PC-9 (cell line): ENCODE measurements at regions of chr17 and their contacts with region 1.

Region 1: GRCh38 chr17:31754239-31754945 is 104.7 kb downstream of the COPRS start:
- DNase-seq: peak in 1 of 2 experiments; percentile 75
- H3K4me3 ChIP-seq: no peak overlapping the region
- H3K27ac ChIP-seq: peak overlapping the region; percentile 67
- H3K4me1 ChIP-seq: peaks cover 19% of the 10 kb centered on the region
- H3K27me3 ChIP-seq: no peaks in the 10 kb centered on the region
- CTCF ChIP-seq: no peak

Region 2: DNA sequence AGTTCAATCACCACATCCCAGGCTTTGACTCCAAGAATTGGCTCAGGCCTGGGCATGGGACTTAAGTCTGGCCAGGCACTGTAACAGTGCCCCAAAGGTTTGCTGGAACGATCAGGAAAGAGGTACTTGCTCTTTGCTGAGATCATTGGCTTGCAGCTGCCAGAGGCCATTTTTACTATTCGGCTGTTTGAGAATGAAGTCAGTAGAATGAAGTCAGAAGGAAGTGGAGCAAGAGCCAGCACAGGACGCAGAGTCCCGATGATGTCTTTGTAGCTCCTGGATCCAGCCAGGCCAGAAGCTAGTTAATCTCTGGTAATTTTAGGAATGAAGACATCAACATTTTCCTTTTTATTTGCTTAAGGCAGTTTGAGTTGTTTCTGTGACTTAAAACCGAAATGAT is 167.4 kb before region 1 on chr17:
- CTCF ChIA-PET with region 1: no interaction called
- POLR2A ChIA-PET with region 1: no interaction called
- intact Hi-C with region 1: no loop called
- DNase-seq: no peak
- H3K4me3 ChIP-seq: no peak overlapping the region
- H3K27ac ChIP-seq: no peak overlapping the region
- H3K4me1 ChIP-seq: peaks cover 16% of the 10 kb centered on the region
- H3K27me3 ChIP-seq: no peaks in the 10 kb centered on the region
- CTCF ChIP-seq: no peak

Region 3: DNA sequence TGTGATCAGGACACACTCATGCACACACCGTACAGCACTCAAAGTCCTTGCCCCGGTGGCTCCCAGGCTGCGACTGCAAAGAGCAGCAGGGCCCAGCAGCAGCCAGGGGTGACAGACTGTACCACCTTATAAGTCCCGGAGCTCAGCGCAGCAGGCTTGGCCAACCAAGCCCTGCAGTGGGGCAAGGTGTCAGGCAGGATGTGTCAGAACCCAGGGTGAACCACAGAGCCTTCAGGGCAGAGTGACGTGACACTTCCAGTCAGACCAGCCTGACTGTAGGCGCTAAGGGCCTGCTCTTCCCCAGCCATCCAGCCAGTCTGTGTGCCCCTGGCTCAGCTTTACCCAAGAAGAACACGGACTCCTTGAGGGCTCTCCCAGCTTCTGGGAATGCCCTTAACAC is 99.5 kb before region 1 on chr17:
- CTCF ChIA-PET with region 1: no interaction called
- POLR2A ChIA-PET with region 1: no interaction called
- intact Hi-C with region 1: no loop called
- DNase-seq: peak; percentile 87 to 93
- H3K4me3 ChIP-seq: no peak overlapping the region
- H3K27ac ChIP-seq: peak overlapping the region; percentile 56
- H3K4me1 ChIP-seq: peaks cover 18% of the 10 kb centered on the region
- H3K27me3 ChIP-seq: no peaks in the 10 kb centered on the region
- CTCF ChIP-seq: no peak

Region 4: DNA sequence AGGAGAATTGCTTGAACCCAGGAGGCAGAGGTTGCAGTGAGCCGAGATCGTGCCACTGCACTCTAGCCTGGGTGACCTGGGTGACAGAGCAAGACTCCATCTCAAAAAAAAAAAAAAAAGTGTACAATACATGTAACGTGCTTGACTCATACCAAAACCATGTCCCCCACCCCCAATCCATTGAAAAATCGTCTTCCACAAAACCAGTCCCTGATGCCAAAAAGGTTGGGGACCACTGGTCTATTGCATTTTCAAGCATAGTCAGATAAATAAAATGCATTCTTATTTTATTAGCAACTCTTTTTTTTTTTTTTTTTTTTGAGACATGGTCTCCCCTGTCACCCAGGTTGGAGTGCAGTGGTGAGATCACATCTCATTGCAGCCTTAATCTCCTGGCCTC is 52.5 kb after region 1 on chr17:
- CTCF ChIA-PET with region 1: interaction called, 28 read pairs
- POLR2A ChIA-PET with region 1: no interaction called
- intact Hi-C with region 1: no loop called
- DNase-seq: no peak
- H3K4me3 ChIP-seq: no peak overlapping the region
- H3K27ac ChIP-seq: no peak overlapping the region
- H3K4me1 ChIP-seq: no peaks in the 10 kb centered on the region
- H3K27me3 ChIP-seq: no peaks in the 10 kb centered on the region
- CTCF ChIP-seq: no peak